SK-N-SH (cell line): ENCODE measurements at regions of chr1 and their contacts with region 1.

Region 1: DNA sequence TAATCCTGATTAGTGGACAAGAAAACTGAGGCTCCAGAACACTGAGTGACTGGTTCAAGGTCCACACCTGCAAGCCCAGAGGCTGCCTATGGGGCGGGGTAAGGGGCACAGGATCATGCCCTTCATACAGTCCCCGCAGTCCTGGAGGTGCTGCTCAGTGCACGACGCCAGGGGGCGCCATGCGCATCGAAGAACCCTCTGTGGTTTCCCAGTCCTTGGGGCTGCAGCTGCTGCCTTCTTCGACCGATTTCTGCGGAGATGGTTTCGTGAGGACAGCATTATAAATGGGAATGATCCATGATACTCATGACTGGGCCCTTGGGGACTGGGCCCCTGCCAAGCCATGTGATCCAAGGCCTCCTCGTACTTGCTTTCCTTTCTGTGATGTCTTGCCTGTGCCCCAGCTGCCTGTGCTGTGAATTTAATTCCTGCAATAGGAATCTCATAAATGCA is 37.1 kb upstream of the ARHGEF10L start:
- DNase-seq: peak; percentile 85
- H3K4me3 ChIP-seq: no peak overlapping the region
- H3K27ac ChIP-seq: no peak overlapping the region
- H3K4me1 ChIP-seq: peaks cover 0 to 2% of the 10 kb centered on the region in 2 experiments; a peak in 1 of 4 replicates
- H3K27me3 ChIP-seq: peaks cover 8% of the 10 kb centered on the region
- CTCF ChIP-seq: peak; percentile 89
- EP300 ChIP-seq: no peak
- RAD21 ChIP-seq: peak; percentile 92

Region 2: GRCh38 chr1:17287130-17287776 is 215.1 kb before region 1 on chr1:
- CTCF ChIA-PET with region 1: no interaction called
- POLR2A ChIA-PET with region 1: no interaction called
- DNase-seq: no peak
- H3K4me3 ChIP-seq: no peak overlapping the region
- H3K27ac ChIP-seq: no peak overlapping the region
- H3K4me1 ChIP-seq: no peaks in the 10 kb centered on the region
- H3K27me3 ChIP-seq: peaks cover 11% of the 10 kb centered on the region; the same call in 1 of the 2 replicates
- CTCF ChIP-seq: no peak
- EP300 ChIP-seq: no peak
- RAD21 ChIP-seq: no peak

Region 3: DNA sequence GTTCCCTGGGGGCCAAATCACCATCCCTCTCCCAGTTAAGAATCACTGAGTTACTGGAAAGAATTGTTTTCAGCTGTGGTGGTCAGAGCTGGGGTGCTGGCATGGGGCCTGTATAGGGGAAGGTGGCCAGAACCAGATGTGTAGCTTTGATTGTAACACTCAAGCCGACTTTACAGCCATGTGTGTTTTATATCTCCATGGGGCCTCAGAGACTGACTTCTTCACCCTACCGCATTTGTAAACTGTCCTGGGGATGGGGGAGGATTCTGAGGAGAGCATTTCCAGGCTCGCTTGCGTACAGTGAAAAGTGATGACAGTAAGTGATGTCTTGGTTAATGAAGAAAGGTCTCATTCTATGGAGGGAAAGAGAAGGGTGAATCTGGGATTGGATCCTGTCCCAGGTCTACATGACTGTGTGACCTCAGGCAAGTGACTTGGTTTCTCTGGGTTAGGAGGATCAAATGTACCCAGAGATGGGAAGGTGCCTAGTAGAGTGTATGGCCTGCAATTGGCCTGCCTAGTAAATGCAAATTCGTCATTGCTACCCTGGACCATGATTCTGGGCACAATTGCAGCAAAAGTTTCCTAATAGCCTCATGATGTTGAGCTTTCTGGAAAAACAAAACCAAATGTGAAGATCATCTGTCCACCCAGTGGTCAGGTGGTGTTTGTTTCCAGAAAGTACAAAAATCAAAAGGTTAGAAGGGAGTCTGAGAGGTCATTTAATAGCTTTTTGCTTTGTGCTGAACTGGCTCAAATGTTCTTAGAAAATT is 13.2 kb before region 1 on chr1:
- CTCF ChIA-PET with region 1: interaction called, 13 read pairs
- POLR2A ChIA-PET with region 1: no interaction called
- DNase-seq: peak; percentile 71
- H3K4me3 ChIP-seq: no peak overlapping the region
- H3K27ac ChIP-seq: peak overlapping the region in 1 of 2 experiments; percentile 54; a peak in 2 of 4 replicates
- H3K4me1 ChIP-seq: peaks cover 6% of the 10 kb centered on the region in 2 experiments; a peak in 2 of 4 replicates
- H3K27me3 ChIP-seq: no peaks in the 10 kb centered on the region
- CTCF ChIP-seq: no peak
- EP300 ChIP-seq: peak in 1 of 2 experiments; percentile 73; a peak in 2 of 4 replicates
- RAD21 ChIP-seq: no peak

Region 4: GRCh38 chr1:17520071-17520813 is 17.9 kb after region 1 on chr1:
- CTCF ChIA-PET with region 1: interaction called, 12 read pairs
- POLR2A ChIA-PET with region 1: no interaction called
- DNase-seq: no peak
- H3K4me3 ChIP-seq: no peak overlapping the region
- H3K27ac ChIP-seq: no peak overlapping the region
- H3K4me1 ChIP-seq: peaks cover 0 to 3% of the 10 kb centered on the region in 2 experiments; a peak in 1 of 4 replicates
- H3K27me3 ChIP-seq: no peaks in the 10 kb centered on the region
- CTCF ChIP-seq: no peak
- EP300 ChIP-seq: no peak
- RAD21 ChIP-seq: no peak

Region 5: DNA sequence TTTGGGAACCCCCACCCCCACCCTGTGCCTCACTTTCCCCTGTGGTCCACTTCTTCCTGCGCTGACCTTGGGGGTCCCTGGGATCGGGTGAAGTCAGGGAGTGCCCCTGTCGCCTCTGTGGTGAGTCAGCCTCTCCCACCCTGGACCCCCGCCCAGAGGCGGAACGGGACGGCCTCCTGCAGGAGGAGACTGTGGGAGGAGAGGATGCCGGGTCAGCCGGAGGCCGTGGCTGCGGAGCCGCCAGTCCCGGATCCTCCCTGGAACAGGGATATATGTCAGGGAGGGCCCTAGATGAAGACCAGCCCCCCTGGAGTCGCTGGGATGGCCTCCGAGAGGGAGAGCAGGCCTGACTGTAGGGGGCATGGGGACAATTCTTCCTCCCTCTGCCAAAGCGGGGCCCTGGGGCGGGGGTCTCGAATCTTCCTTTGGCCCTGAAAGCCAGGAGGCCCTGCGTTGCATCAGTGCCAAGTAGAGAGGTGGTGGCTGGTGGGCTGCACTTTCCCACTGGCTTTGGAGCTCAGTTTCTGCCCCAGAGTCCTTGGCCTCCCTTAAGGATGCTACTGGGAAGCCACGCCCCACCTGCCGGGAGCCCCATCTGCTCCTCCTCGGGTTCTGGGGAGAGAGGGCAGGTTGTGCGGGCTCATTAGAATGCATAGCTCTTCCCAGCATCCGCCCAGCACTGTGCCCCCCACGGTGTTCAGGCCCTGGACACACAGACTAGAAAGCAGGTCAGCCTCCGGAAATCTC is 38.1 kb after region 1 on chr1:
- CTCF ChIA-PET with region 1: interaction called, 21 read pairs
- POLR2A ChIA-PET with region 1: no interaction called
- DNase-seq: peak; percentile 85
- H3K4me3 ChIP-seq: peak overlapping the region; percentile 85 to 89
- H3K27ac ChIP-seq: peak overlapping the region; percentile 82 to 92
- H3K4me1 ChIP-seq: peaks cover 13 to 30% of the 10 kb centered on the region in 2 experiments
- H3K27me3 ChIP-seq: no peaks in the 10 kb centered on the region
- CTCF ChIP-seq: no peak
- EP300 ChIP-seq: no peak
- RAD21 ChIP-seq: 0 out of 2 replicates have a peak, but pooled peaks have one; percentile 1

Region 6: GRCh38 chr1:17581389-17582123 is 79.2 kb after region 1 on chr1:
- CTCF ChIA-PET with region 1: interaction called, 24 read pairs
- POLR2A ChIA-PET with region 1: no interaction called
- DNase-seq: peak; percentile 70
- H3K4me3 ChIP-seq: no peak overlapping the region
- H3K27ac ChIP-seq: peak overlapping the region in 1 of 2 experiments; percentile 51; a peak in 2 of 4 replicates
- H3K4me1 ChIP-seq: peaks cover 3 to 34% of the 10 kb centered on the region in 2 experiments; a peak in 3 of 4 replicates
- H3K27me3 ChIP-seq: no peaks in the 10 kb centered on the region
- CTCF ChIP-seq: no peak
- EP300 ChIP-seq: no peak
- RAD21 ChIP-seq: no peak